ENCODE measurements at regions of chr18 and their contacts with region 1.

Region 1: GRCh38 chr18:22813648-22814328 is 119.3 kb upstream of the RBBP8 start:
- DNase-seq: no peak
- H3K4me3 ChIP-seq: no peak overlapping the region
- CTCF ChIP-seq: peak; percentile 55

Region 2: DNA sequence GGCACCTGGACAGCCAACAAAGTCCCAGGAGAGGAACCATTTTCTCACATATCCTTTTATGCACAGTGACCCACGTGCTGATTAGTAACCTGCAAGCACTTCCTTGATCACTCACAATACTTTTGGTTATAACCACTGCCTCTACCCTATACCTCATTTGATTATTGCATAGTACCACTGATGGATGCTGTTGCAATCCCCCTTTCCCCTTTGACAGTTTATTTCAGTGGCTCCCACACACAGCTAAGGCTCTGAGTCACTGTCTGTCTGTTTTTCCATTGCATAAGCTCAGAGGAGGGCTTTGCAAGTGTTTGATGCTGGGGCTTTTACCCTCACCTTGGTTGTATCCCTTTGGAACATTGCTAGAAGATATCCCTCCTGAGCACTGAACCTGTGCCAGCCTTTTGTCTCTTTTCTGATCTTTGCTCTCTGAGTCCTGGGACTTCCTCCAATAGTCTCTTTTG is 17.7 kb after region 1 on chr18:
- CTCF ChIA-PET with region 1: interaction called, 13 read pairs
- POLR2A ChIA-PET with region 1: no interaction called
- DNase-seq: peak; percentile 42
- H3K4me3 ChIP-seq: no peak overlapping the region
- CTCF ChIP-seq: no peak

Region 3: GRCh38 chr18:22977847-22978701 is 164.3 kb after region 1 on chr18:
- CTCF ChIA-PET with region 1: interaction called, 114 read pairs
- POLR2A ChIA-PET with region 1: no interaction called
- DNase-seq: peak; percentile 40
- H3K4me3 ChIP-seq: no peak overlapping the region
- CTCF ChIP-seq: no peak

Region 4: GRCh38 chr18:23032030-23032582 is 218.3 kb after region 1 on chr18:
- CTCF ChIA-PET with region 1: interaction called, 12 read pairs
- POLR2A ChIA-PET with region 1: no interaction called
- DNase-seq: peak; percentile 65
- H3K4me3 ChIP-seq: no peak overlapping the region
- CTCF ChIP-seq: no peak